Activated CD8-positive, alpha-beta T cell treated with anti-CD3 and anti-CD28 coated beads for 36 hours (primary cell): ENCODE measurements at regions of chr19 and their contacts with region 1.

Region 1: DNA sequence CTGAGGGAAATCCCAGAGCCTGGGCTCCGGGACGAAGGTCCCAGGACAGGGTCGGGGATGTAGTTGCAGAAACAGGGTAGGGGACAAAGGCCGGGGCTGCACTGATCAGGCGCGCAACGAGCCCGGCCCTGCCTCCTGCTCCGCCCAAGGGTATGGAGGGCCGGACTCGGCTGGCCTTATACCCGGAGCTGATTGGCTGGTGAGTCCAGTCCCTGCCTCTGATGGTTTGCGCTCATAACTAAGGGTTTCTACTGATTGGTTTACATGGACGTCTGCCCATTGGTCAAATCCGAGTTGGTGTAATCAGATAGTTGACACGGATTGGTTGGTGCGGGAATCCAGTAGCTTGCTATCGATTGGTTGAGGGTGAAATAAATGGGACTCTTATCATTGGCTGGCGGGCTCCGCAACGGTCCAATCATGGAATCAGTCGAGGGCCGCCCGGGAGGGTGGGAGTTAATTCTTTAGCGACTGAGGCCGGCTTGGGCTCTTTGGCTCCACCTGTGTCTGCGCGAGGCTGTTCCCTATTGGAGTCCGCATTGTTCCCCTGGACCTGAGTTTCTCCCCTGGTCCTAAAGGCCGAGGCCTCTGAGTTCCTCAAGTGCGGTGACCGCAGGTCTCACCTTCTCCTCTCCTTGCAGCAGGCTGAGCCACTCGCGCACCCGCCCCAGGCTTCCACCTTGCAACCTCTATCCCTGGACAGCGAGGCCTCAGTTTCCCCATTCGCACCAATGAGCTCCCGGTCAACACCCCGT is 570 bp upstream of the MPND start:
- DNase-seq: peak; percentile 98
- ATAC-seq: peak; percentile 91
- H3K4me3 Mint-ChIP-seq: peak overlapping the region; percentile 93
- H3K27ac Mint-ChIP-seq: peak overlapping the region; percentile 94
- H3K4me1 Mint-ChIP-seq: peaks cover 22% of the 10 kb centered on the region
- H3K27me3 Mint-ChIP-seq: no peaks in the 10 kb centered on the region
- CTCF ChIP-seq: peak; percentile 27

Region 2: GRCh38 chr19:4246767-4247593 is 95.8 kb before region 1 on chr19 and contains the start of gene YJU2:
- CTCF ChIA-PET with region 1: interaction called, 10 read pairs
- POLR2A ChIA-PET with region 1: no interaction called
- intact Hi-C with region 1: no loop called
- DNase-seq: peak; percentile 100
- ATAC-seq: peak; percentile 98
- H3K4me3 Mint-ChIP-seq: peak within 1 kb of the TSS; percentile 83
- H3K27ac Mint-ChIP-seq: peak within 1 kb of the TSS; percentile 97
- H3K4me1 Mint-ChIP-seq: peaks cover 16% of the 10 kb centered on the region
- H3K27me3 Mint-ChIP-seq: no peaks in the 10 kb centered on the region
- CTCF ChIP-seq: peak; percentile 25
- total RNA-seq, gene YJU2: 25.5 to 25.8 TPM

Region 3: DNA sequence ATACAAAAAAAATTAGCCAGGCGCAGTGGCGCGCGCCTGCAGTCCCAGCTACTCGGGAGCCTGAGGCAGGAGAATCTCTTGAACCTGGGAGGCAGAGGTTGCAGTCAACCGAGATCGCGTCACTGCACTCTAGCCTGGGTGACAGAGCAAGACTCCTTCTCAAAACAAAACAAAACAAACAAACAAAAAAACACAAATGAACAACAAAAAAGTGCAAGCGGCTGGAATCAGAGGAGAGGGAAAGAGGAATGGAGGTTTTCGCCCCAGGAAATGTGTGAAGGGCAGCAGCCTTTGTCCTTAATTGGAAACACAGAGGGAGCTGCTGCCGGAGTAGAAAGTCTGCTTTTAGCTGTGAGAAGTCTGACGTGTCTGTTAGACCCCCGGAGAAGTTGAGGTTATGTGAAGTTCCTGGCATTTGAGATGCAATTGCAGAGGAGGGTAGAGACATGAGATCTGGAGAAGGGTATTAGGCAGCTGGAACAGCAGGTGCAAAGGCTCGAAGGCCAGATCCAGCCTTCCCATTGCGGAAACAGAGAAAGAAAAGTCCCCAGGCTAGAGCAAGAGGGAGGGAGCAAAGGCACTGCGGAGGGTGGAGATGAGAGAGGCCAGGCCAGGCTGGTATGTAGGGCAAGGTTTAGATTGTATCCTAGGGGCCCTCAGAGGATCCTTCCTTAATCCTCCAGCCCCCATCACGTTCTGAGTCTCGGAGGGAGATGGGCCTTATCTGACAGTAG is 41.1 kb before region 1 on chr19:
- CTCF ChIA-PET with region 1: interaction called, 4 read pairs
- POLR2A ChIA-PET with region 1: interaction called, 11 read pairs
- intact Hi-C with region 1: no loop called
- DNase-seq: peak; percentile 29
- ATAC-seq: peak; percentile 11
- H3K4me3 Mint-ChIP-seq: peak overlapping the region; percentile 83
- H3K27ac Mint-ChIP-seq: peak overlapping the region; percentile 89
- H3K4me1 Mint-ChIP-seq: peaks cover 36% of the 10 kb centered on the region
- H3K27me3 Mint-ChIP-seq: no peaks in the 10 kb centered on the region
- CTCF ChIP-seq: no peak

Region 4: GRCh38 chr19:4328243-4328990 is 14.4 kb before region 1 on chr19:
- CTCF ChIA-PET with region 1: interaction called, 7 read pairs
- POLR2A ChIA-PET with region 1: interaction called, 17 read pairs
- intact Hi-C with region 1: no loop called
- DNase-seq: peak; percentile 96
- ATAC-seq: peak; percentile 90
- H3K4me3 Mint-ChIP-seq: peak overlapping the region; percentile 93
- H3K27ac Mint-ChIP-seq: peak overlapping the region; percentile 92
- H3K4me1 Mint-ChIP-seq: peaks cover 26% of the 10 kb centered on the region
- H3K27me3 Mint-ChIP-seq: no peaks in the 10 kb centered on the region
- CTCF ChIP-seq: no peak

Region 5: GRCh38 chr19:4362861-4363510 is 20.2 kb after region 1 on chr19:
- CTCF ChIA-PET with region 1: interaction called, 10 read pairs
- POLR2A ChIA-PET with region 1: interaction called, 7 read pairs
- intact Hi-C with region 1: no loop called
- DNase-seq: no peak
- ATAC-seq: peak; percentile 13
- H3K4me3 Mint-ChIP-seq: no peak overlapping the region
- H3K27ac Mint-ChIP-seq: peak overlapping the region; percentile 15
- H3K4me1 Mint-ChIP-seq: peaks cover 4% of the 10 kb centered on the region
- H3K27me3 Mint-ChIP-seq: no peaks in the 10 kb centered on the region
- CTCF ChIP-seq: peak; percentile 25

Region 6: GRCh38 chr19:4431808-4432674 is 89.2 kb after region 1 on chr19:
- CTCF ChIA-PET with region 1: no interaction called
- POLR2A ChIA-PET with region 1: no interaction called
- intact Hi-C with region 1: no loop called
- DNase-seq: no peak
- ATAC-seq: no peak
- H3K4me3 Mint-ChIP-seq: no peak overlapping the region
- H3K27ac Mint-ChIP-seq: no peak overlapping the region
- H3K4me1 Mint-ChIP-seq: no peaks in the 10 kb centered on the region
- H3K27me3 Mint-ChIP-seq: no peaks in the 10 kb centered on the region
- CTCF ChIP-seq: no peak

Region 7: DNA sequence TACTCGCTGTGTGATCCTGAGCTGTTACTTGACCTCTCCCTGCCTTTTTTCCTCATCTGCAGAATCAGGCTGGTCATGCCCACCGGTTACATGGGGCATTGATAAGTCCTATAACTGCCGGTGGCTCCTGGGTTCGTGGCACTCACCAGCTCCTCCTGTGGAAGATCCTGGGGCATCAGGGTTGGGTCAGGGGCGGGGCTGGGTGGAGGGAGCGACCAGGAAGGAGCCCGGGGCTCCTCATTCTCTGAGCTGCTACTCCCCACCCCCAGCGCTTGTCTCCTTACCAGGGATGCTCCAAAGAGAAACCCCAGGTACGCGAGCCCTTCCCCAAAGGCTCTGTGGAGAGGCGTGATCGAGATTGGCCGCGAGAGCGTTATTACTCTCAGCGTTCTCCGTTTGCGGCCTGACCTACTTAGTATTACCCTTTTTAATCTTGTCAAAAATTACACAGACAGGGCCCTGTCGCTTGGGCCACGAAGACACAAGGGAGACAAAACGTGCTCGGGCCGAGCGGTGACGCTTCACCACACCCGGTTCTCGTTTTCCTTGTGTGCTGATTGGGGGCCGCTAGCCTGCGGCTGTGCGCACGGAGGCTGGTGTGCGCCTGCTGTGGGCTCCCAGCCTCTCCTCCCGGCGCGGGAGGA is 140.1 kb after region 1 on chr19:
- CTCF ChIA-PET with region 1: no interaction called
- POLR2A ChIA-PET with region 1: no interaction called
- intact Hi-C with region 1: no loop called
- DNase-seq: no peak
- ATAC-seq: no peak
- H3K4me3 Mint-ChIP-seq: no peak overlapping the region
- H3K27ac Mint-ChIP-seq: no peak overlapping the region
- H3K4me1 Mint-ChIP-seq: no peaks in the 10 kb centered on the region
- H3K27me3 Mint-ChIP-seq: no peaks in the 10 kb centered on the region
- CTCF ChIP-seq: no peak